Posterior cingulate gyrus (tissue), 11 donors: ENCODE measurements at regions of chr4 and their contacts with region 1.

Region 1: GRCh38 chr4:177339477-177340374 is 30.1 kb downstream of the NEIL3 start:
- DNase-seq: no peak

Region 2: GRCh38 chr4:177250056-177250696 is 89.5 kb before region 1 on chr4:
- intact Hi-C with region 1: loop called (anchors 1 kb)
- DNase-seq: peak; percentile 21 to 92 (median 62)